Left cardiac atrium (tissue), 4 donors: ENCODE measurements at regions of chr1 and their contacts with region 1.

Region 1: DNA sequence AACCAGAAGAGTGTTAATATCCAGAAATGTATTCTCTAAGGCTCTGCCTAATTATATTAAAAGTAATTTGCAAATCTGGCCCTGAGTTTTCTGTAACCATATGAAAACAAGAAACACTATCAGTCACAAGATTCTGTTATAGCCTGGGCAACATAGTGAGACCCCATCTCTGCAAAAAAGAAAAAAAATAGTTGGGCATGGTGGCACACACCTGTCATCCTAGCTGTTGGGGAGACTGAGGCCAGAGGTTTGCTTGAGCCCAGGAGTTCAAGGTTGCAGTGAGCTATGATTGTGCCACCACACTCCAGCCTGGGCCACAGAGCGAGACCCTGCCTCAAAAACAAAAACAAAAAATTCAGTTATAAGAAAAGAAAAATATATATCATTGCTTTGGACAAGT is 25.6 kb downstream of the C1orf21 start:
- DNase-seq: no peak
- ATAC-seq: no peak

Region 2: DNA sequence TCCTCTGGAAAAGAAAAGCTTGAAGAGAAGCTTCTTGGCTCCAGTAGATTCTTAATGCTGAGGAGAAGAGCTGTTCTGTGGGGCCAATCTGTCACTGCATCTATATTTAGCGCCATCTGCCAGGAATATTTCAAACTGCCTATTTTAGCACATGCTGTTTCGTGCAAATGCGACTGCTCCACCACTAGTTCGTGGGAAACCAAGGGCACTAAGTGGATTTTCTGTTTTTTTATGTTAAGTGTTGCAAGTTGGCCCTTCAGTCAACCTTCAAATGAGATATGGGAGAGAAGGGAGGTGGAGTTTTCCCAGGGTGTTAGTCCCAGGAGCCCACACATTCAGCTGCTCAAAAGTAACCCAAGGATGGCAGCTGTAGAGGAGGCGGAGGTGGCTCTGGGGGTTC is 269.0 kb before region 1 on chr1:
- intact Hi-C with region 1: no loop called
- DNase-seq: no peak
- ATAC-seq: peak; percentile 61 to 70

Region 3: GRCh38 chr1:184457500-184457899 is 45.0 kb after region 1 on chr1:
- intact Hi-C with region 1: loop called in 1 of 2 experiments (anchors 5 kb)
- DNase-seq: no peak
- ATAC-seq: no peak